ENCODE measurements at regions of chr9 and their contacts with region 1.

Region 1: GRCh38 chr9:21802195-21803000 is at the start of gene MTAP:
- DNase-seq: peak in 4 of 5 donors; percentile 66 to 79 (median 76)
- H3K4me3 ChIP-seq: peak within 1 kb of the TSS; percentile 69 to 86
- H3K4me3 Mint-ChIP-seq: peak within 1 kb of the TSS; percentile 95 to 100 (median 99)
- H3K27ac ChIP-seq: peak within 1 kb of the TSS; percentile 50
- H3K27ac Mint-ChIP-seq: peak within 1 kb of the TSS; percentile 94 to 99 (median 98)
- H3K4me1 ChIP-seq: peaks cover 37% of the 10 kb centered on the region
- H3K4me1 Mint-ChIP-seq: peaks cover 28 to 52% (median 39%) of the 10 kb centered on the region in 4 donors
- H3K27me3 ChIP-seq: no peaks in the 10 kb centered on the region
- H3K27me3 Mint-ChIP-seq: peaks cover 4 to 5% of the 10 kb centered on the region in 2 donors
- total RNA-seq, gene MTAP: 45.5 to 47.9 TPM

Region 2: GRCh38 chr9:21334701-21335632 is 467.4 kb before region 1 on chr9 and contains the start of gene KLHL9:
- CTCF ChIA-PET with region 1: no interaction called
- POLR2A ChIA-PET with region 1: interaction called, 4 read pairs
- intact Hi-C with region 1: loop called (anchors 2 kb)
- DNase-seq: peak; percentile 86 to 88 (median 88)
- H3K4me3 ChIP-seq: peak within 1 kb of the TSS; percentile 80 to 96
- H3K4me3 Mint-ChIP-seq: peak within 1 kb of the TSS; percentile 89 to 97 (median 94)
- H3K27ac ChIP-seq: peak within 1 kb of the TSS; percentile 98
- H3K27ac Mint-ChIP-seq: peak within 1 kb of the TSS; percentile 95 to 98 (median 97)
- H3K4me1 ChIP-seq: peaks cover 59% of the 10 kb centered on the region
- H3K4me1 Mint-ChIP-seq: peaks cover 37 to 69% (median 49%) of the 10 kb centered on the region in 4 donors
- H3K27me3 ChIP-seq: no peaks in the 10 kb centered on the region
- H3K27me3 Mint-ChIP-seq: peaks cover 0 to 3% of the 10 kb centered on the region in 2 donors
- total RNA-seq, gene KLHL9: 38.7 to 40.1 TPM

Region 3: DNA sequence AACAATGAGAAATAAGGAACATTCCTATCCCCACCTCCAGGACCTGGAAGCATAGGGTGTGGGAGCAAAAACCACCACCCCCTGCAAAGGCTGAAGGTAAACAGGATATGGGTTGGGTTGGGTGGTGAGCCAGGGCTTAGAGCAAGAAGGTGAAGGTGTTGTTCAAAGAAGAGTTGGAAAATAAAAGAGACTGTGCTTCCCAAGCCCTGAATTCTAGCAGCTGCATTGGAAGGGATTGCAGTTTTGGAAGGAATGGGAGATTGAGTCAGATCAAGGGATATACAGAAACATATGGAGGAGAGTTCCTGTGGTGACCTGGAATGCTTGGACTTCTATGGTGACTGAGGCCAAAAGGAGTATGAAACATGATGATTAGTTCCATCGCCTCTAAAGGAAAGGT is 24.7 kb before region 1 on chr9:
- CTCF ChIA-PET with region 1: no interaction called
- POLR2A ChIA-PET with region 1: interaction called, 10 read pairs
- intact Hi-C with region 1: no loop called
- DNase-seq: peak in 3 of 5 donors; percentile 7 to 18 (median 12)
- H3K4me3 ChIP-seq: peak overlapping the region in 1 of 2 donors; percentile 30
- H3K4me3 Mint-ChIP-seq: no peak overlapping the region
- H3K27ac ChIP-seq: no peak overlapping the region
- H3K27ac Mint-ChIP-seq: no peak overlapping the region
- H3K4me1 ChIP-seq: peaks cover 39% of the 10 kb centered on the region
- H3K4me1 Mint-ChIP-seq: peaks cover 0 to 4% (median 3%) of the 10 kb centered on the region in 4 donors
- H3K27me3 ChIP-seq: no peaks in the 10 kb centered on the region
- H3K27me3 Mint-ChIP-seq: no peaks in the 10 kb centered on the region

Region 4: GRCh38 chr9:22037954-22038690 is 235.7 kb after region 1 on chr9:
- CTCF ChIA-PET with region 1: interaction called, 349 read pairs
- POLR2A ChIA-PET with region 1: no interaction called
- intact Hi-C with region 1: no loop called
- DNase-seq: peak in 4 of 5 donors; percentile 22 to 39 (median 32)
- H3K4me3 ChIP-seq: no peak overlapping the region
- H3K4me3 Mint-ChIP-seq: no peak overlapping the region
- H3K27ac ChIP-seq: no peak overlapping the region
- H3K27ac Mint-ChIP-seq: no peak overlapping the region
- H3K4me1 ChIP-seq: peaks cover 11% of the 10 kb centered on the region
- H3K4me1 Mint-ChIP-seq: peaks cover 0 to 8% (median 4%) of the 10 kb centered on the region in 4 donors
- H3K27me3 ChIP-seq: no peaks in the 10 kb centered on the region
- H3K27me3 Mint-ChIP-seq: no peaks in the 10 kb centered on the region

Measured in CD4-positive, alpha-beta memory T cell (primary cell).